Dendritic cell treated with granulocyte-macrophage colony-stimulating factor and Interleukin-4, amounts not matched to agents 40 ng/mL and 50 ng/mL, for 4 days (primary cell): ENCODE measurements at regions of chr14 and their contacts with region 1.

Region 1: DNA sequence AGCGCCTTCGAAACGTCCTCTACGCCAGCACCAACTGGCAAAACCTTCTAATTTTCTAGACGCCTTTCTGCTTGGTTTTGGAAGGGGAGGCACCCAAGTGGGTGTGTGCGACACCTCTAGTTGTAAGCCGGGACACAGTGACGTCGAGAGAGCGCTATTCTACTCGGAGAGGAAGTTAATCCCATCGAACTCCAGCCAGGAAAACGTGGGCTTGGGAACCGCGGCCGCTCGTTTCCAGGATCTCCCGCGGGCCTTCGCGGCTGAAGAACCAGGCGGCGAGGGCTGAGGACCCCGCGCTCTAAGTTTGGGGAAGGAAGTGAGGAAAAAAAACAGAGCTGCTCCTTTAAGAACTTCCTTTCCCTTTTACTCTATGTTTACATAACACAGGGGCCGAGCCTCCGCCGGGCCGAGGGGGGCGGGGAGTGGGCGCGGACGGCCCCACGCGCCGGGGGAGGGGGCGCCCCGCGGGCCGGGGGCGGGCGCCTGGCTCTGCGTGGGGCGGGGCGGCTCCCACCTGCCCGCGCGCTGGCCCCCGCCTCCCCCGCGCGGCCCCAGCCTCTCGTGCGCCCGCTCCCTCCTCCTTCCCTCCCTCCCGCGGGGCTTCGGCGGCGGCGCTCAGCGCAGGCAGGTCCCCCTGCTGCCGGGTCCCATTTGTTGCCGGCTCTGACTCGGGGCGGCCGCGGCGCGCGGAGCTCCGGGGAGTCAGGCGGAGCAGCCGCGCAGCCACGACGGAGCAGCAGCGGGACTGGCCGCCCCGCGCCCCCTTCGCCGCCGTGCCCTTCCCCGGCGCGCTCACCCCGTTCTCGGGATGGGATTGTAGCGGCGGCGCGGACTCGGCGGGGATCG is at the start of gene PELI2:
- H3K4me3 Mint-ChIP-seq: peak within 1 kb of the TSS; percentile 94
- H3K27ac Mint-ChIP-seq: peak within 1 kb of the TSS; percentile 85
- H3K4me1 Mint-ChIP-seq: peaks cover 55% of the 10 kb centered on the region
- H3K27me3 Mint-ChIP-seq: no peaks in the 10 kb centered on the region

Region 2: DNA sequence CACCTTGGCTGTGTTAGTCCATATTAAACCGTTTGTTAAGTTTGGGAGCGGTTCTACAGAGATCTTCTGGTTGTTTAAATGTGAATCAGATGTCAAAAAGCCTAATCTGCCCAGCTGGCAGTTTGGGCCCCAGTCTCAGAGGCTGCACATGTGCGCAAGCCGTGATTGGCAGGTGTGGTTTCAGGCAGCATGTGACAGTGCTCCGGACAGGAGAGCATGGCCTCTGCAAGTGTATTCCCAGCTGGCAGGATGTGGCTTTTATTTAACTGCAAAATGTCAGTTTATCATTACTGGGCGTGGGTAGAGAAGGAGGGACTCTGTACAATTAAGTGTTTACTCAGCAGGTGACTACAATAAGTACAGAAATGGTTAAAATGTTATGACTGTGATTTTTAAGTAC is 77.7 kb after region 1 on chr14:
- intact Hi-C with region 1: loop called (anchors 5 kb)
- H3K4me3 Mint-ChIP-seq: no peak overlapping the region
- H3K27ac Mint-ChIP-seq: peak overlapping the region; percentile 64
- H3K4me1 Mint-ChIP-seq: peaks cover 24% of the 10 kb centered on the region
- H3K27me3 Mint-ChIP-seq: no peaks in the 10 kb centered on the region